ENCODE measurements at regions of chr7 and their contacts with region 1.

Region 1: GRCh38 chr7:73792594-73793292 is 22.7 kb upstream of the CLDN3 start:
- DNase-seq: peak; percentile 91 to 98
- H3K4me3 ChIP-seq: no peak overlapping the region
- H3K4me3 Mint-ChIP-seq: no peak overlapping the region
- H3K27ac Mint-ChIP-seq: peak overlapping the region; percentile 10
- H3K4me1 ChIP-seq: peaks cover 40% of the 10 kb centered on the region
- H3K4me1 Mint-ChIP-seq: peaks cover 37% of the 10 kb centered on the region
- H3K27me3 ChIP-seq: no peaks in the 10 kb centered on the region
- H3K27me3 Mint-ChIP-seq: no peaks in the 10 kb centered on the region
- CTCF ChIP-seq: no peak

Region 2: GRCh38 chr7:73623798-73624668 is 168.7 kb before region 1 on chr7 and contains the start of gene MLXIPL:
- CTCF ChIA-PET with region 1: no interaction called
- POLR2A ChIA-PET with region 1: no interaction called
- intact Hi-C with region 1: no loop called
- DNase-seq: peak; percentile 93 to 94
- H3K4me3 ChIP-seq: peak within 1 kb of the TSS; percentile 98
- H3K4me3 Mint-ChIP-seq: peak within 1 kb of the TSS; percentile 88
- H3K27ac Mint-ChIP-seq: no peak within 1 kb of the TSS
- H3K4me1 ChIP-seq: peaks cover 18% of the 10 kb centered on the region
- H3K4me1 Mint-ChIP-seq: peaks cover 8% of the 10 kb centered on the region
- H3K27me3 ChIP-seq: no peaks in the 10 kb centered on the region
- H3K27me3 Mint-ChIP-seq: peaks cover 3% of the 10 kb centered on the region
- CTCF ChIP-seq: no peak
- total RNA-seq, gene MLXIPL: 15.6 and 19.8 TPM in 2 replicates

Region 3: DNA sequence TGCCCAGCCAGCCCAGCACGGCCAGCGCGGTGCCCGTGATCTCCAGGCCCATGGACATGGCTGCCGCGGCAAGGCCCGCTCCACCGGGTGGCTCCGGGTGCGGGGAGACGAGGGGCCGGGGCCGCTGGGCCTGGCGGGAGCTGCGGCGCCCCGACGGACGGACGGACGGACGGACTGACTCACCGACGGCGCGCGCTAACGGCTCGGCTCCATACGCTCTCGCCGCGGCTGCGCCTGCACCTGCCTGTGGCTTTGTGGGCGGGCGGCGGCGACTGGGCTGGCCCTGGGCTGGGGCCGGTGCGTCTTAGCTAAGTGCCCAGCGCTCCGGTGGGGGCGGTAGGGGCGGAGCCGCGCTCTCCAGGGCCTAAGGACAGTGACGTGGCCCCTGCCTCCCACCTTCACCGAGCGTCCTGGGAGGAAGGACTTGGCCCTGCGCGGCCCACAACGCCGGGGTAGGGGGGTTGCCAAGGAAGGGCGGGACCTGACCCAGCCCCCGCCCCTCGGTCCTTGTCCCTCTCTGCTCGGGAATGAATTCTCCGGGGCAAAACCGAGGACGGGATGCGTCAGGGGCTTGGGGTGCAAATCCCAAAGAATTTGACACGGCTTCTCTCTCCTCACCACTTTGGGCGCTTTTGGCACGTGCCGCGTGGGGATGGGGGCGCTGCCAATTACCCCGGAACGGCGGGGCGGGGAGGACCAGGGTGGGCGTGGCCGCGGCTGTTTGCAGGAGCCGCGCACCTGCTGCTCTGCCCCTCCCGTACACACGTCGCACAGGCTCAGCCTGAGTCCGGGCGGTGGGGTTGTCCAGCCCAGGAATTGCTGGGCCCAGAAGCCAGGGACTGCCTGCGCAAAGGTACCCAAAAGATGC is 22.5 kb before region 1 on chr7 and contains the start of gene CLDN3:
- CTCF ChIA-PET with region 1: no interaction called
- POLR2A ChIA-PET with region 1: interaction called, 3 read pairs
- intact Hi-C with region 1: loop called (anchors 1 kb)
- DNase-seq: peak; percentile 93 to 94
- H3K4me3 ChIP-seq: peak within 1 kb of the TSS; percentile 66
- H3K4me3 Mint-ChIP-seq: peak within 1 kb of the TSS; percentile 81
- H3K27ac Mint-ChIP-seq: peak within 1 kb of the TSS; percentile 73
- H3K4me1 ChIP-seq: peaks cover 15% of the 10 kb centered on the region
- H3K4me1 Mint-ChIP-seq: peaks cover 18% of the 10 kb centered on the region
- H3K27me3 ChIP-seq: no peaks in the 10 kb centered on the region
- H3K27me3 Mint-ChIP-seq: no peaks in the 10 kb centered on the region
- CTCF ChIP-seq: peak in 1 of 2 experiments; percentile 21
- total RNA-seq, gene CLDN3: 19.6 and 21.0 TPM in 2 replicates

Measured in Caco-2 (cell line).